K562 (cell line): ENCODE measurements at regions of chr10 and their contacts with region 1.

Region 1: DNA sequence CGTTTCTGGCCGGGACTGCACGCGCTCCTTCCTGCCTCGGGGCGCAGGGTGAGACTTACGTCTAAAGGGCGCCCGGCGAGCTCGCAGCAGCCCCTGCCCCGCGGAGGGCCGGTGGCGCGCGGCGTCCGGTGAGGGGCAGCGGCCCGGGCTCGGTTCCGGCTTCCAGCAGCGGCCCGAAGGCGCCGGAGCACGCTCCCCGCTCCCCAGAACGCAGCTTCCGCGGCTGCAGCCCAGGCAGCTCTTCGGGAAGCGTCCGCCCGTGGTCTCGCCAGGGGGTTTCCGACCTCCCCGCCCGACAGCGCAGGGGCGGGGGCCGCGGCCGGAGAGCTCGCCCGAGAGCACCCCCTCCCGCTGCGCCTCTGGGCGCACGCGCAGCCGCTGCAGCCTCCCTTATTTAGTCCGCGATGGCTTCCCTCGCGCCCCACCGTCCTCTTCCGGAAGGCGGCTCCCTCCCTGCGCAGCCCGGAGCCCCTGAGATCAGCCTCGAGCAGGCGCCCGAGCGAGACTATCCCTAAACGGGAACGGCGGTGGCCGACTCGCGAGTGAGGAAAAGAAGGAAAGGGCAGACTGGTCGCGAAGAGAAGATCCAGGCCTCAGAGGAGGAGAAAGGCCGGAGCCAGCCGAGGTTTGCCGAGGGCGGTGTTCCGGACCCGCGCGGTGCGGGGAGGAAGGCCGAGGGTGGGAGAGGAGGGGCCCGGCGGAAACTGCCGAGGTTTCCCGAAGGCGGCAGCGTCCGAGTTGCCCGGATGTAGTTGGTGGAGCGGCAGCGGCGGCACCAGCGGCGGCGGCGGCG is at the start of gene WAC:
- DNase-seq: peak; percentile 86 to 96 (median 90)
- ATAC-seq: peak; percentile 91
- H3K4me3 ChIP-seq: peak within 1 kb of the TSS; percentile 95
- H3K27ac ChIP-seq: peak within 1 kb of the TSS; percentile 99
- H3K4me1 ChIP-seq: peaks cover 23 to 30% of the 10 kb centered on the region in 2 experiments
- H3K27me3 ChIP-seq: no peaks in the 10 kb centered on the region
- CTCF ChIP-seq: peak in 1 of 3 experiments; percentile 13; a peak in 1 of 6 replicates
- EP300 ChIP-seq: no peak
- POLR2A ChIP-seq: peak; percentile 98
- RAD21 ChIP-seq: no peak
- polyA plus RNA-seq, gene WAC: 24.8 to 25.3 TPM

Region 2: GRCh38 chr10:28280652-28281051 is 251.9 kb before region 1 on chr10:
- CTCF ChIA-PET with region 1: no interaction called
- POLR2A ChIA-PET with region 1: no interaction called
- in situ Hi-C with region 1: no loop called
- intact Hi-C with region 1: no loop called
- DNase-seq: no peak
- ATAC-seq: no peak
- H3K4me3 ChIP-seq: no peak overlapping the region
- H3K27ac ChIP-seq: no peak overlapping the region
- H3K4me1 ChIP-seq: no peaks in the 10 kb centered on the region
- H3K27me3 ChIP-seq: peaks cover 5 to 7% of the 10 kb centered on the region in 2 experiments; a peak in 2 of 5 replicates
- CTCF ChIP-seq: no peak
- EP300 ChIP-seq: no peak
- POLR2A ChIP-seq: no peak
- RAD21 ChIP-seq: no peak

Region 3: GRCh38 chr10:28432210-28432676 is 100.3 kb before region 1 on chr10:
- CTCF ChIA-PET with region 1: no interaction called
- POLR2A ChIA-PET with region 1: no interaction called
- in situ Hi-C with region 1: no loop called
- intact Hi-C with region 1: loop called (anchors 2 kb)
- DNase-seq: peak; percentile 63 to 75 (median 71)
- ATAC-seq: peak; percentile 81
- H3K4me3 ChIP-seq: no peak overlapping the region
- H3K27ac ChIP-seq: no peak overlapping the region
- H3K4me1 ChIP-seq: peaks cover 0 to 2% of the 10 kb centered on the region in 2 experiments; a peak in 2 of 5 replicates
- H3K27me3 ChIP-seq: peaks cover 5 to 11% of the 10 kb centered on the region in 2 experiments
- CTCF ChIP-seq: peak; percentile 77 to 83 (median 83)
- EP300 ChIP-seq: no peak
- POLR2A ChIP-seq: no peak
- RAD21 ChIP-seq: peak; percentile 76 to 84

Region 4: DNA sequence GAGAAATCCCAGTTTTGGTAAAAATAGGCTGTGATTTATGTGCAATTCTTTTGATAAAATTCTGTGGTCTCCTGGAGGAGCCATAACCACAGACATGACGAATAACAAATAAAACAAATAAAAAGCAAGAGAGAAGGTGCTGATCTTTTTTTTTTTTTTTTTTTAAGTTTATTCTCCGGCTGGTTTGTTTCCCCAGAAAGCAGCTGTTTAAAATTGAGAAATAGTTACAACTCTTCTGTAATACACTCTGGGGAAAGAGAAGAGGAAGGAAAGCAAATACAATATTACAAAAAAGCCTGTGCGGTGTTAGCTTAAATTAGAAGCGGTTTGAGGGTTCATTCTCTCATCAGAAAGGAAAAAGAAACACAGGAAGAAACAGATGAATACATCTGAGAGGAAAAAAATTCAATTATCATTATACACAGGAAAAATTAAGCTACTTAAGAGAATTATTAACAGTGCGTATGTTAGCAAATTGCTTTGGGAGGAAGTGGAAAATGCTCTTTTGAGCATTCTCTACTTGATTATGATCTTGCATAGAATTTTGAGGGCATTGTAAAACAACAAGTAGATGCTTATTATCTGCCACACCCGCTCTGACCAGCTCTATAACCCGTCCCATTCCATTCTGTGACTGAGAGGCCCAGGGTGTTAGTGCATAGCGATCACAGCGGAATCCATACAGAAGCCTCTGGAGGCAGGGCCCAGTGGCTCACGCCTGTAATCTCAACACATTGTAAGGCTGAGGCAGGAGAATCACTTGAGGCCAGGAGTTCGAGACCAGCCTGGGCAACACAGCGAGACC is 40.3 kb before region 1 on chr10:
- CTCF ChIA-PET with region 1: no interaction called
- POLR2A ChIA-PET with region 1: interaction called, 3 read pairs
- in situ Hi-C with region 1: no loop called
- intact Hi-C with region 1: loop called (anchors 5 kb)
- DNase-seq: no peak
- ATAC-seq: no peak
- H3K4me3 ChIP-seq: no peak overlapping the region
- H3K27ac ChIP-seq: no peak overlapping the region
- H3K4me1 ChIP-seq: peaks cover 13 to 27% of the 10 kb centered on the region in 2 experiments; a peak in 4 of 5 replicates
- H3K27me3 ChIP-seq: no peaks in the 10 kb centered on the region
- CTCF ChIP-seq: no peak
- EP300 ChIP-seq: no peak
- POLR2A ChIP-seq: no peak
- RAD21 ChIP-seq: no peak

Region 5: GRCh38 chr10:28545967-28546644 is 13.5 kb after region 1 on chr10:
- CTCF ChIA-PET with region 1: no interaction called
- POLR2A ChIA-PET with region 1: interaction called, 23 read pairs
- in situ Hi-C with region 1: no loop called
- intact Hi-C with region 1: no loop called
- DNase-seq: no peak
- ATAC-seq: no peak
- H3K4me3 ChIP-seq: no peak overlapping the region
- H3K27ac ChIP-seq: no peak overlapping the region
- H3K4me1 ChIP-seq: no peaks in the 10 kb centered on the region
- H3K27me3 ChIP-seq: no peaks in the 10 kb centered on the region
- CTCF ChIP-seq: no peak
- EP300 ChIP-seq: no peak
- POLR2A ChIP-seq: no peak
- RAD21 ChIP-seq: no peak

Region 6: DNA sequence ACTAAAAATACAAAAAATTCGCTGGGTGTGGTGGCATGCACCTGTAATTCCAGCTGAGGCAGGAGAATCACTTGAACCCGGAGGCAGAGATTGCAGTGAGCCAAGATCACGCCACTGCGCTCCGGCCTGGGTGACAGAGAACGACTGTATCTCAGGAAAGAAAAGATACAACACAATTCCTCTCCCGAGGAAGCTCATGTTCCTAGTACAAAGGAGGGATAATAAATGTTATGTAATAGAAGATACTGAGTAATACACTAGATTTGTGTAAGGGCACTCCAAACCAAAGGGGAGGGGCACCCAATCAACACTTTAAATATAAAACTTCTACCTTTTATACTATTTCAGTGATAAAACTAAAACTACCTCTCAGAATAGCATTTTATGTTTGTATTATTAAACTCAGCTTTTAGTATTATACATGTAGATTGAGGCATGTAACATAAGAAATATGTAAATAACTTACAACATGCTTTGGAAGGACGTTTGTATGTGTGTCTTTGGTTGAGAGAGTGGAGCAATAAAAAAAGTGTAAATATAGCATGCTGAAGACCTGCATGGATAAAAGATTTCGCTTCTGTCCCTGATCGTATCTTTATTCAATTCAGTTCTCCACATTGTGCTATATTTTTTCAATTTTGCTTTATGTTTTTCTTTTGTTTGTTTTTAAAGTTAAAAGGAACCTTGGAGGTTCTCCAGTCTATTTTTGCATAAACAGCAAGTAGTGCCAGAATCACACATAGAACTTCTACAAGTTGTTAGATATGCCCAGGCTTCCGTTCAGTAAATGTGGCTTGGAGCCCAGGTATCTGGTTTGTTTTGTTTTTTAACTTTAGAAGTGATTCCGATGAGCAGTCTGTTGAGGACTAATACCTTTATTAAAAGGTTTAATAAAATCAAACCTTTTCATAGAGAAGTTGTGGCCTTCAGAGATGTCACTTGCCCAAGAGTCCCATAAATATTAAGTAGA is 72.3 kb after region 1 on chr10:
- CTCF ChIA-PET with region 1: no interaction called
- POLR2A ChIA-PET with region 1: no interaction called
- in situ Hi-C with region 1: no loop called
- intact Hi-C with region 1: no loop called
- DNase-seq: no peak
- ATAC-seq: no peak
- H3K4me3 ChIP-seq: no peak overlapping the region
- H3K27ac ChIP-seq: no peak overlapping the region
- H3K4me1 ChIP-seq: no peaks in the 10 kb centered on the region
- H3K27me3 ChIP-seq: no peaks in the 10 kb centered on the region
- CTCF ChIP-seq: no peak
- EP300 ChIP-seq: no peak
- POLR2A ChIP-seq: no peak
- RAD21 ChIP-seq: no peak

Region 7: GRCh38 chr10:28997739-28998138 is 465.2 kb after region 1 on chr10:
- CTCF ChIA-PET with region 1: no interaction called
- POLR2A ChIA-PET with region 1: no interaction called
- in situ Hi-C with region 1: no loop called
- intact Hi-C with region 1: no loop called
- DNase-seq: no peak
- ATAC-seq: no peak
- H3K4me3 ChIP-seq: no peak overlapping the region
- H3K27ac ChIP-seq: no peak overlapping the region
- H3K4me1 ChIP-seq: no peaks in the 10 kb centered on the region
- H3K27me3 ChIP-seq: peaks cover 11 to 20% of the 10 kb centered on the region in 2 experiments
- CTCF ChIP-seq: no peak
- EP300 ChIP-seq: no peak
- POLR2A ChIP-seq: no peak
- RAD21 ChIP-seq: no peak